B cell (primary cell): ENCODE measurements at regions of chr2 and their contacts with region 1.

Region 1: GRCh38 chr2:28958689-28959088 is 22.4 kb upstream of the TOGARAM2 start:
- DNase-seq: peak; percentile 63
- ATAC-seq: peak; percentile 54
- H3K4me3 ChIP-seq: no peak overlapping the region
- H3K4me3 Mint-ChIP-seq: no peak overlapping the region
- H3K27ac ChIP-seq: no peak overlapping the region
- H3K27ac Mint-ChIP-seq: no peak overlapping the region
- H3K4me1 ChIP-seq: no peaks in the 10 kb centered on the region
- H3K4me1 Mint-ChIP-seq: peaks cover 2% of the 10 kb centered on the region
- H3K27me3 ChIP-seq: peaks cover 0 to 4% (median 0%) of the 10 kb centered on the region in 4 experiments
- H3K27me3 Mint-ChIP-seq: peaks cover 4% of the 10 kb centered on the region
- CTCF ChIP-seq: peak; percentile 70

Region 2: GRCh38 chr2:28681158-28681571 is 277.5 kb before region 1 on chr2:
- CTCF ChIA-PET with region 1: no interaction called
- POLR2A ChIA-PET with region 1: no interaction called
- intact Hi-C with region 1: no loop called
- DNase-seq: peak; percentile 62
- ATAC-seq: peak; percentile 92
- H3K4me3 ChIP-seq: no peak overlapping the region
- H3K4me3 Mint-ChIP-seq: peak overlapping the region; percentile 17
- H3K27ac ChIP-seq: no peak overlapping the region
- H3K27ac Mint-ChIP-seq: no peak overlapping the region
- H3K4me1 ChIP-seq: peaks cover 11 to 13% of the 10 kb centered on the region in 2 donors
- H3K4me1 Mint-ChIP-seq: peaks cover 15% of the 10 kb centered on the region
- H3K27me3 ChIP-seq: no peaks in the 10 kb centered on the region
- H3K27me3 Mint-ChIP-seq: no peaks in the 10 kb centered on the region
- CTCF ChIP-seq: no peak

Region 3: GRCh38 chr2:29196792-29197788 is 238.4 kb after region 1 on chr2:
- CTCF ChIA-PET with region 1: interaction called, 20 read pairs
- POLR2A ChIA-PET with region 1: no interaction called
- intact Hi-C with region 1: loop called (anchors 1 kb)
- DNase-seq: peak; percentile 71
- ATAC-seq: peak; percentile 74
- H3K4me3 ChIP-seq: no peak overlapping the region
- H3K4me3 Mint-ChIP-seq: no peak overlapping the region
- H3K27ac ChIP-seq: no peak overlapping the region
- H3K27ac Mint-ChIP-seq: no peak overlapping the region
- H3K4me1 ChIP-seq: no peaks in the 10 kb centered on the region
- H3K4me1 Mint-ChIP-seq: no peaks in the 10 kb centered on the region
- H3K27me3 ChIP-seq: no peaks in the 10 kb centered on the region
- H3K27me3 Mint-ChIP-seq: peaks cover 3% of the 10 kb centered on the region
- CTCF ChIP-seq: peak; percentile 83